ENCODE measurements at regions of chr1 and their contacts with region 1.

Region 1: GRCh38 chr1:220272047-220272840 is at the start of gene RAB3GAP2:
- DNase-seq: peak; percentile 97 to 98 (median 97)
- H3K4me3 ChIP-seq: peak within 1 kb of the TSS; percentile 84 to 96
- H3K4me3 Mint-ChIP-seq: no peak within 1 kb of the TSS
- H3K27ac ChIP-seq: peak within 1 kb of the TSS; percentile 95
- H3K27ac Mint-ChIP-seq: no peak within 1 kb of the TSS
- H3K4me1 ChIP-seq: peaks cover 38% of the 10 kb centered on the region
- H3K4me1 Mint-ChIP-seq: peaks cover 11 to 15% (median 13%) of the 10 kb centered on the region in 4 donors
- H3K27me3 ChIP-seq: no peaks in the 10 kb centered on the region
- H3K27me3 Mint-ChIP-seq: peaks cover 3 to 6% of the 10 kb centered on the region in 2 donors
- total RNA-seq, gene RAB3GAP2: 44.4 to 44.9 TPM

Region 2: GRCh38 chr1:218284934-218285635 is 1987.2 kb before region 1 on chr1 and contains the start of gene RRP15:
- CTCF ChIA-PET with region 1: no interaction called
- POLR2A ChIA-PET with region 1: no interaction called
- intact Hi-C with region 1: loop called (anchors 10 kb)
- DNase-seq: peak; percentile 81 to 86 (median 82)
- H3K4me3 ChIP-seq: peak within 1 kb of the TSS; percentile 81 to 93
- H3K4me3 Mint-ChIP-seq: peak within 1 kb of the TSS; percentile 93 to 100 (median 98)
- H3K27ac ChIP-seq: peak within 1 kb of the TSS; percentile 60
- H3K27ac Mint-ChIP-seq: peak within 1 kb of the TSS; percentile 91 to 99 (median 96)
- H3K4me1 ChIP-seq: peaks cover 24% of the 10 kb centered on the region
- H3K4me1 Mint-ChIP-seq: peaks cover 17 to 41% (median 27%) of the 10 kb centered on the region in 4 donors
- H3K27me3 ChIP-seq: no peaks in the 10 kb centered on the region
- H3K27me3 Mint-ChIP-seq: peaks cover 5 to 7% of the 10 kb centered on the region in 2 donors
- total RNA-seq, gene RRP15: 14.1 to 16.8 TPM

Region 3: DNA sequence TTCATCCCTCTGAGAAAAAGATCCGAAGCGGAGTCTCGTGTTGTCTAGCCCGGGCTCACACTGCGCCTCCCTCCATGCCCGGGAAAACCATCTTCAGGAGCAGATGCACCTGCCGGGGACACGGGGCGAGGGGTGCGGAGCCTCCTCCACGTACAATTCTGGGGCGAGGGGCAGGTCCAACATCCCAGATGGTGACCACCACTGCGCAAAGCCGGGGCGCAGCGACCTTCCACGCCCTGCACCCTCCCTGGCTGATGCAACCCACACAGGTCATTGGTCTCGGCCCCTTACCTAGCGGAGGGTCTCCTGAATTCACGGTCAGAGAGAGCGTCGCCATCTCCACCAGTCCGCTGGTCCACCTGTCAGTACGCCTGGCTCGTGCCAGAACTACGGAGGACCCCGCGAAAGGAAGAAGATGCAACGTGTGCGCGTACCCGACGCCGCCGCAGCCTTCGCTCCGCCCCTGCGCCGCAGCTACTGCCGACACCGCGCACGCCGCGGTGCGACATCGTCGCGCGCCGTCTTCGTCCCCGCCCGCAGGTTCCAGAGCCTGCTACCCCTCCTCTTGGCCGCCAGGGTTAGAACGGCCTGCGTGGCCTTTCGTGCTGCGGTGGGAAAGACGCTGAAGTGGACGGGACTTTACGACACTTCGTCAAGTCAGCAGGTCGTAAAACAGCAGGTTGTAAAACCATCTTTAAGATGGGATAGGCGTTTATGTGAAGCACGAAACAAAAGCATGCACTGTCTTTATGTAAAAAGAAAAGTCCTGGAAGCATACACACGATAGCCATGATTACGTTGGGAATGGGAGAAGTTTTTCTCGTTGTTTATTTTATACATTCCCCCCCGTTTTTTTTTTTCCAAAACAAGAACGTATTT is 226.0 kb before region 1 on chr1 and contains the start of gene EPRS1:
- CTCF ChIA-PET with region 1: no interaction called
- POLR2A ChIA-PET with region 1: no interaction called
- intact Hi-C with region 1: loop called (anchors 1 kb)
- DNase-seq: peak; percentile 95 to 97 (median 96)
- H3K4me3 ChIP-seq: peak within 1 kb of the TSS; percentile 78 to 90
- H3K4me3 Mint-ChIP-seq: peak within 1 kb of the TSS; percentile 91 to 99 (median 94)
- H3K27ac ChIP-seq: peak within 1 kb of the TSS; percentile 91
- H3K27ac Mint-ChIP-seq: peak within 1 kb of the TSS; percentile 93 to 98 (median 96)
- H3K4me1 ChIP-seq: peaks cover 31% of the 10 kb centered on the region
- H3K4me1 Mint-ChIP-seq: peaks cover 25 to 53% (median 33%) of the 10 kb centered on the region in 4 donors
- H3K27me3 ChIP-seq: no peaks in the 10 kb centered on the region
- H3K27me3 Mint-ChIP-seq: no peaks in the 10 kb centered on the region
- total RNA-seq, gene EPRS1: 98.7 to 116 TPM

Measured in CD4-positive, alpha-beta memory T cell (primary cell).